Panc1 (cell line): ENCODE measurements at regions of chr18 and their contacts with region 1.

Region 1: GRCh38 chr18:21914739-21915319 is 174.2 kb downstream of the MIB1 start:
- DNase-seq: no peak
- ATAC-seq: no peak
- H3K4me3 ChIP-seq: no peak overlapping the region
- H3K27ac ChIP-seq: no peak overlapping the region
- H3K4me1 ChIP-seq: no peaks in the 10 kb centered on the region
- H3K27me3 ChIP-seq: peaks cover 3% of the 10 kb centered on the region; the same call in 1 of the 2 replicates
- CTCF ChIP-seq: peak; percentile 74

Region 2: GRCh38 chr18:21383031-21383430 is 531.8 kb before region 1 on chr18:
- CTCF ChIA-PET with region 1: no interaction called
- POLR2A ChIA-PET with region 1: no interaction called
- in situ Hi-C with region 1: no loop called
- intact Hi-C with region 1: no loop called
- DNase-seq: no peak
- ATAC-seq: no peak
- H3K4me3 ChIP-seq: no peak overlapping the region
- H3K27ac ChIP-seq: no peak overlapping the region
- H3K4me1 ChIP-seq: no peaks in the 10 kb centered on the region
- H3K27me3 ChIP-seq: no peaks in the 10 kb centered on the region
- CTCF ChIP-seq: no peak

Region 3: DNA sequence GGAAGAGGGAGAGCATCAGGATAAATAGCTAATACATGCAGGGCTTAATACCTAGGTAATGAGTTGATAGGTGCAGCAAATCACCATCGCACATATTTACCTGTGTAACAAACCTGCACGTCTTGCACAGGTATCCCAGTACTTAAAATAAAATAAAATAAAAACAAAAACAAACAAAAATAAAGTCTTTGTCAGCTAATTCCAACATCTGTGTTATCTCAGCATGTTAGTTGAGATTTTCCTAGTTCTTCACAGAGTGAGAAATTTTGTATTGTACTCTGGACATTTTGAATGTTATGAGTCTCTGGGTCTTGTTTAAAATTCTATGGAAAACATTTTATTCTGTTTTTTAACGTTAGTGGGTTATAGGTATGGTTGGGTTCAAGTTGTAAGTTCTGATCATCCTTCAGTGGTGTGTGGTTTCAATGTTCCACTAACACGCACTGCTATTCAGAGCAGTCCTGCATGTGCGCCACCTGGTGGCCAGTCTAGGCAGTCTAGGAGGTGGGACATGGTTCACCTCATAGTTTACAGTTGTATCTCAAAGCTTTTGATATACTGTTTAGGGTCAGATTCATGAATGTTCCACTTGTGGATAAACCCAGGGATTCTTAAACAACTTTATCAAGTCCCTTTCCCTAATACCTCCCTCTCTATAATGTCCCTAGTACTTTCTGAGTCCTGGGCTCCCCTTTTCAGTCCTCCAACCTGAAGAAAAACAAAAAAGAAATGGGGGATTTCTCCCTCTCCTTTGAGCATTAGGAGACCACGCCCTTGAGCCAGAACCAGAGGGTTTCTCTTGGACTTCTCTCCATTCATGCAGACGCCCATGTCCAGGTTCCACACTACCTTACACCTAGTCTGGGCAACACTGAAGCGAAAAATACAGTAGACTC is 41.2 kb after region 1 on chr18:
- CTCF ChIA-PET with region 1: no interaction called
- POLR2A ChIA-PET with region 1: no interaction called
- in situ Hi-C with region 1: no loop called
- intact Hi-C with region 1: loop called (anchors 2 kb)
- DNase-seq: peak; percentile 25
- ATAC-seq: peak; percentile 99
- H3K4me3 ChIP-seq: no peak overlapping the region
- H3K27ac ChIP-seq: no peak overlapping the region
- H3K4me1 ChIP-seq: no peaks in the 10 kb centered on the region
- H3K27me3 ChIP-seq: no peaks in the 10 kb centered on the region
- CTCF ChIP-seq: peak; percentile 93

Region 4: DNA sequence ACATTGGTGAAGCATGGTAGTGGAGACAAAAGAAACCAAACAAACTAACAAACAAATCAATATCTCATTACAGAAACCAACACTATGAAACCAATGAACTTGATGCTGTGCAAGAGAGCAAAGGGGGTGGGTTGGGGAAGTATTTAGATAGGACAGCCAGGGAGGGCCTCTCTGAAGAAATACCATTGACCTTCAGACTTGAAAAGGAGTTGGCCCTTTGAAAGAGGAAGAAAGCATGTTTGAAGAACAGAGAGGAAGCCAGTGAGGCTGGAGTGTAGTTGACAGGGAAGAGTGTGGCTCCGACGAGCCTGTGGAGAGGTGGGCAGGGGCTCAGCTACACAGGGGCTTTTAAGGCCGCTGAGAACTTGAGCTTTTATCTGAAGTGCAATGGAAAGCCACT is 103.5 kb after region 1 on chr18:
- CTCF ChIA-PET with region 1: no interaction called
- POLR2A ChIA-PET with region 1: no interaction called
- in situ Hi-C with region 1: no loop called
- intact Hi-C with region 1: no loop called
- DNase-seq: no peak
- ATAC-seq: no peak
- H3K4me3 ChIP-seq: no peak overlapping the region
- H3K27ac ChIP-seq: no peak overlapping the region
- H3K4me1 ChIP-seq: no peaks in the 10 kb centered on the region
- H3K27me3 ChIP-seq: no peaks in the 10 kb centered on the region
- CTCF ChIP-seq: no peak

Region 5: DNA sequence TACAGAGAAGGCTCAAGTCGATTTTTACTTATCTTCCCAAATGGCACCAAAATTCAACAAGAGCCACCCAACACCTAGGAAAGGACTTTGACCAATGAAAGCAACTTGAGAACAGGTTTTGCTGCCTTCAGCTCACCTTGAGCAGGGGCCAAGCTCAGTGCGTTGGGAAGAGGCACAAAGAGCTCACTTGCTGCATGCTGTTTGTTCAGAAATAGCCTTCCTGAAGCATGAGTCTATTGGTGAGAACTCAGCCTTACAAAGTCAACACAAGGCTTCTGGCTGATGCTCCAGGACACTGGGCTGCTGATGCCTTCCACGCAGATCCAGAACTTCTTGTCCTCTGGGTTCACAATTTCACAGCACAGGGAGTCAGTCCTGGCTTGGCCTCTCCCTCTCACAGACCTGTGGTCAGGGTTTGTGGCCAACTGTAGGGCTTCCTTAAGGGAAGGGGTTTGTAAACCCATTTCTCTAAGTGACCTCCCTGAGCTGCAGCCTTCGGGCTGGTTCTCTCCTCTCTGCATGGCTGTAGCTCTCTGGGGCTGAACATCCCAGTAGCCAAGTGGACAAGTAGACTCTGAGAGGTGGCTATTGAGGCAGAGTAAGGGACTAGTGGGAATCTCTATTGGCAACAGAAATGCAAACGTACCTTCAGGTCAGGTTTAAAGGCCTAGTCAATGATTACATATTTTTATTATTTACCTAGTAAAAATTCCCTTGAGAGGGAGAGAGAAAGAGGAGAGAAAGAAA is 129.8 kb after region 1 on chr18:
- CTCF ChIA-PET with region 1: no interaction called
- POLR2A ChIA-PET with region 1: no interaction called
- in situ Hi-C with region 1: no loop called
- intact Hi-C with region 1: no loop called
- DNase-seq: no peak
- ATAC-seq: no peak
- H3K4me3 ChIP-seq: no peak overlapping the region
- H3K27ac ChIP-seq: no peak overlapping the region
- H3K4me1 ChIP-seq: no peaks in the 10 kb centered on the region
- H3K27me3 ChIP-seq: no peaks in the 10 kb centered on the region
- CTCF ChIP-seq: no peak